ENCODE measurements at regions of chr1 and their contacts with region 1.

Region 1: GRCh38 chr1:154955718-154956543 is at the start of gene PBXIP1:
- DNase-seq: peak; percentile 76 to 89
- ATAC-seq: peak; percentile 93 to 95
- H3K4me3 ChIP-seq: peak within 1 kb of the TSS; percentile 67 to 77 (median 69)
- H3K27ac ChIP-seq: peak within 1 kb of the TSS; percentile 92 to 98 (median 94)
- H3K4me1 ChIP-seq: peaks cover 62 to 66% of the 10 kb centered on the region in 2 donors
- H3K27me3 ChIP-seq: no peaks in the 10 kb centered on the region
- CTCF ChIP-seq: no peak
- POLR2A ChIP-seq: peak; percentile 67 to 71
- total RNA-seq, gene PBXIP1: 126 to 171 (median 165) TPM

Region 2: GRCh38 chr1:154863315-154864174 is 92.4 kb before region 1 on chr1:
- in situ Hi-C with region 1: no loop called
- intact Hi-C with region 1: no loop called
- DNase-seq: peak; percentile 68 to 91
- ATAC-seq: peak; percentile 35 to 37
- H3K4me3 ChIP-seq: no peak overlapping the region
- H3K27ac ChIP-seq: peak overlapping the region; percentile 91 to 99 (median 96)
- H3K4me1 ChIP-seq: peaks cover 67 to 81% of the 10 kb centered on the region in 2 donors
- H3K27me3 ChIP-seq: no peaks in the 10 kb centered on the region
- CTCF ChIP-seq: peak; percentile 85 to 94 (median 91)
- POLR2A ChIP-seq: peak; percentile 65 to 72

Region 3: GRCh38 chr1:154936555-154937084 is 19.3 kb before region 1 on chr1 and contains the start of gene PMVK:
- in situ Hi-C with region 1: no loop called
- intact Hi-C with region 1: loop called (anchors 1 kb)
- DNase-seq: peak; percentile 92 to 95
- ATAC-seq: peak; percentile 94 to 96
- H3K4me3 ChIP-seq: peak within 1 kb of the TSS; percentile 65 to 97 (median 83)
- H3K27ac ChIP-seq: peak within 1 kb of the TSS; percentile 93 to 99 (median 98)
- H3K4me1 ChIP-seq: peaks cover 11 to 15% of the 10 kb centered on the region in 2 donors
- H3K27me3 ChIP-seq: no peaks in the 10 kb centered on the region
- CTCF ChIP-seq: peak in 3 of 5 experiments; percentile 36 to 55 (median 42)
- POLR2A ChIP-seq: peak in 1 of 2 donors; percentile 30
- total RNA-seq, gene PMVK: 4.6 to 7.6 (median 6.1) TPM